Ascending aorta (tissue), 2 donors: ENCODE measurements at regions of chr4 and their contacts with region 1.

Region 1: GRCh38 chr4:16544251-16544731 is 318.0 kb upstream of the TAPT1 start:
- DNase-seq: no peak
- H3K4me3 ChIP-seq: no peak overlapping the region
- H3K27ac ChIP-seq: no peak overlapping the region
- H3K4me1 ChIP-seq: no peaks in the 10 kb centered on the region
- H3K27me3 ChIP-seq: no peaks in the 10 kb centered on the region
- CTCF ChIP-seq: no peak

Region 2: DNA sequence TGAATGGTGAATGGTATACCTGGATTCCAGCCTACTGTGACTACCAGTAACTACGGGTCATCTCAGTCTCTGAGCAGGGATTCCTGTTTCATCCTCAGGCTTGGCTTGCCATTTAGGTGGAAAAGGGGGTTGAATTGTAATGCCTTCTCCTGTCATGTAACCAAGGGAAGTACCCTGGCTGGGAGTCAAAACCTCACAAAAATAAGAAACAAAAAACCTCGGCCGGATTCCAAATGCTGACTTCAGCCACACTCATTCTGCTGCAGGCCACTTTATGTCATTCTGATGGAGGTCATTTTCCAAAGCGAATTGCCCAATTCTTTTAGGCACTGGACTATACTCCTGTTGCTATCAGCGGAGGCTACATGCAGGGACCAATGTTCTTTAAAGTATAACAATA is 29.5 kb after region 1 on chr4:
- intact Hi-C with region 1: no loop called
- DNase-seq: peak in 1 of 2 donors; percentile 73
- H3K4me3 ChIP-seq: no peak overlapping the region
- H3K27ac ChIP-seq: no peak overlapping the region
- H3K4me1 ChIP-seq: no peaks in the 10 kb centered on the region
- H3K27me3 ChIP-seq: no peaks in the 10 kb centered on the region
- CTCF ChIP-seq: no peak

Region 3: DNA sequence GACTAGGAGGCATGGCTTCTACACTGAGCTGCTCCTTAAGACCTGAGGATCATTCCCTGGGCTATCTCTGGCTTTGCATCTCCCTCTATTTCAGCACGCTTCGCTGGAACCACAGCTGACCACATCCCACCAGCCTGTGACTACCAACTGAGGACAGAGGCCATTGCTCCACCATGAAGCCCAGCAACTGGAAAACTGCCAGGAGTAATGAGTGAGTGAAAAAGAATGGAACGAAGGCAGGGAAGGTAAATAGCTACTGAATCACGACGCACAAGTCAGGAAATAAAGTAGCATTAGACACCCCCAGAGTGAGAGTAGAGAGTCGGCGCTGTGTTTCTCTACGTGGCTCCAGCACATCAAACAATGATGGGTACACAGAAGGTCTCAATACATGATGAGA is 39.5 kb after region 1 on chr4:
- intact Hi-C with region 1: loop called (anchors 1 kb)
- DNase-seq: no peak
- H3K4me3 ChIP-seq: no peak overlapping the region
- H3K27ac ChIP-seq: no peak overlapping the region
- H3K4me1 ChIP-seq: no peaks in the 10 kb centered on the region
- H3K27me3 ChIP-seq: no peaks in the 10 kb centered on the region
- CTCF ChIP-seq: no peak